ENCODE measurements at regions of chr10 and their contacts with region 1.

Region 1: DNA sequence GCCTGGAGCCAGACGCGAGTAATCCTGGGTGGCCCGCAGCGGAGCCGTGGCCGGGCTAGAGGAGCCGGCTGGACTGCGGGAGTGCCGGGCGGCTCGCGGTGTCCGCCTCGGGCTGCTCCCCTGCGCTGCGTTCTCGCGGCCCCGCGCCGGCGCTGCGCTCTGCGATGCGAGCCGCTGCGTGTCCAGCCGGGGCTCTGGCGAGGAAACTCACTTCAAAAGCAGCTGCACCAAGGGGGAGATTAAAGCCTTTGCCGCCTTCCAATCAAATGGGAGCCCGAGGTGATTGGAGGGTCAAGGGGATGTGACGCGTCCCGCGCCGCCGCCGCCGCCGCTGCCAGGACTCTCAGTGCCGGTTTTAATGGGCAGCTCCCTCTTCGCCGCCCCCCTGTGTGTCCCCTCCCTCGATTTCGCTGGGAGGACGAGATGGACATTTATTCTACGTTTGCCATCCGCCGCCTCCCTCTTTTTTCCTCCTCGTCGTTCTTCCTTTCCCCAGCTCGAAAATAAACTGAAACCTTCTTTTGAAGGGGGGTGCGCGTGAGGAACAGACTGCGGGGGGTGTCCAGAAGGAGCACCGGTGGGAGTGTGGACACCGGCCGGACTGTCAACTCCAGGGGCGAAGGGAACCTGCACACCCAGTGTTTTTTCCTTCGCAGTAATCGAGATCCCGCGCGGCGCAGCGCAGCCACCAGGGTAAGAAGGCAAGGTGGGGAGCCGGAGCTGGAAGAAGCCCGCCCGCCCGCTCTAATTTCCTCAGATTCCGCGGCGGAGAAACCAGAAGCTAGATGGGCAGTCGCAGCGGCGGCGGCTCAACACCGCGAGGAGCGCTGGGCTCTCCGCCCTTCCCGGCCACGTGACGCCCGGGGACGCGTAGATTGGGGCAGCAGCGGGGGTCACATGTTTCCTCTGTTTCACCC is at the start of gene ZNF503:
- DNase-seq: peak; percentile 99
- H3K4me3 ChIP-seq: peak within 1 kb of the TSS; percentile 76 to 97 (median 92)
- H3K27ac ChIP-seq: peak within 1 kb of the TSS; percentile 93 to 99 (median 98)
- H3K4me1 ChIP-seq: peaks cover 0 to 38% (median 29%) of the 10 kb centered on the region in 4 donors
- H3K27me3 ChIP-seq: no peaks in the 10 kb centered on the region
- CTCF ChIP-seq: peak; percentile 15 to 66 (median 46)
- EP300 ChIP-seq: peak in 2 of 4 donors; percentile 60 to 69
- POLR2A ChIP-seq: peak; percentile 65 to 80
- total RNA-seq, gene ZNF503: 10.0 to 20.3 (median 18.2) TPM

Region 2: GRCh38 chr10:74855027-74855426 is 546.8 kb before region 1 on chr10:
- intact Hi-C with region 1: no loop called
- DNase-seq: peak; percentile 73
- H3K4me3 ChIP-seq: no peak overlapping the region
- H3K27ac ChIP-seq: peak overlapping the region in 3 of 4 donors; percentile 14 to 38 (median 30)
- H3K4me1 ChIP-seq: peaks cover 0 to 72% (median 29%) of the 10 kb centered on the region in 4 donors
- H3K27me3 ChIP-seq: no peaks in the 10 kb centered on the region
- CTCF ChIP-seq: no peak
- EP300 ChIP-seq: no peak
- POLR2A ChIP-seq: no peak

Region 3: DNA sequence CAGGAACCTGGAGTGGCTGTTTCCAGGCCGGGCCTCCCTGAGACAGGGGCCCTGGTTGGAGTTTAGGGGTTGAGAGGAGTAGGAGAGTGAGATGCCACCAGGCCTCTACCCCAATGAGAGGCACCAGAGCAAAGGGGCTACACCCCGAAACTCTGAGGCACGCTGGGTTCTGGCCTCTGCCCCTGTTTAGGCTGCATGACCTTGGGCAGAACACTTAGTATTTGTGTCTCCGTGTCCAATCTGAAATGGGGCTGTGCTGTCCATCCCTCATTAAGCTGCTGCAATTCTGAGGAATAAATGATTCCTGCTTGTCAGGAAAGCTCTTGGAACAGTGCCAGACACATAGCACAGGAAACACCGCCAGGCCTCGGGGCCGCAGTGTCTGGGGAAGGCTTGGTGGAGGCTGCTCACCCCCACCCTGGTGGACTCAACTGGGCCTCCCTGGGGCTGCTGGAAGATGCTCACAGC is 330.8 kb before region 1 on chr10:
- intact Hi-C with region 1: no loop called
- DNase-seq: no peak
- H3K4me3 ChIP-seq: no peak overlapping the region
- H3K27ac ChIP-seq: no peak overlapping the region
- H3K4me1 ChIP-seq: no peaks in the 10 kb centered on the region
- H3K27me3 ChIP-seq: no peaks in the 10 kb centered on the region
- CTCF ChIP-seq: no peak
- EP300 ChIP-seq: no peak
- POLR2A ChIP-seq: no peak

Region 4: GRCh38 chr10:75449382-75450070 is 47.7 kb after region 1 on chr10:
- intact Hi-C with region 1: no loop called
- DNase-seq: no peak
- H3K4me3 ChIP-seq: no peak overlapping the region
- H3K27ac ChIP-seq: peak overlapping the region in 1 of 4 donors; percentile 50
- H3K4me1 ChIP-seq: peaks cover 0 to 23% (median 0%) of the 10 kb centered on the region in 4 donors
- H3K27me3 ChIP-seq: no peaks in the 10 kb centered on the region
- CTCF ChIP-seq: no peak
- EP300 ChIP-seq: no peak
- POLR2A ChIP-seq: no peak

Region 5: GRCh38 chr10:75662715-75663114 is 260.9 kb after region 1 on chr10:
- intact Hi-C with region 1: loop called (anchors 2 kb)
- DNase-seq: peak; percentile 90
- H3K4me3 ChIP-seq: no peak overlapping the region
- H3K27ac ChIP-seq: peak overlapping the region; percentile 72 to 86 (median 82)
- H3K4me1 ChIP-seq: peaks cover 0 to 47% (median 33%) of the 10 kb centered on the region in 4 donors
- H3K27me3 ChIP-seq: no peaks in the 10 kb centered on the region
- CTCF ChIP-seq: no peak
- EP300 ChIP-seq: peak in 3 of 4 donors; percentile 76 to 81 (median 77)
- POLR2A ChIP-seq: no peak

Region 6: GRCh38 chr10:75910032-75910431 is 508.2 kb after region 1 on chr10:
- intact Hi-C with region 1: loop called (anchors 2 kb)
- DNase-seq: no peak
- H3K4me3 ChIP-seq: no peak overlapping the region
- H3K27ac ChIP-seq: no peak overlapping the region
- H3K4me1 ChIP-seq: no peaks in the 10 kb centered on the region
- H3K27me3 ChIP-seq: no peaks in the 10 kb centered on the region
- CTCF ChIP-seq: peak; percentile 21 to 62 (median 54)
- EP300 ChIP-seq: no peak
- POLR2A ChIP-seq: no peak

Region 7: DNA sequence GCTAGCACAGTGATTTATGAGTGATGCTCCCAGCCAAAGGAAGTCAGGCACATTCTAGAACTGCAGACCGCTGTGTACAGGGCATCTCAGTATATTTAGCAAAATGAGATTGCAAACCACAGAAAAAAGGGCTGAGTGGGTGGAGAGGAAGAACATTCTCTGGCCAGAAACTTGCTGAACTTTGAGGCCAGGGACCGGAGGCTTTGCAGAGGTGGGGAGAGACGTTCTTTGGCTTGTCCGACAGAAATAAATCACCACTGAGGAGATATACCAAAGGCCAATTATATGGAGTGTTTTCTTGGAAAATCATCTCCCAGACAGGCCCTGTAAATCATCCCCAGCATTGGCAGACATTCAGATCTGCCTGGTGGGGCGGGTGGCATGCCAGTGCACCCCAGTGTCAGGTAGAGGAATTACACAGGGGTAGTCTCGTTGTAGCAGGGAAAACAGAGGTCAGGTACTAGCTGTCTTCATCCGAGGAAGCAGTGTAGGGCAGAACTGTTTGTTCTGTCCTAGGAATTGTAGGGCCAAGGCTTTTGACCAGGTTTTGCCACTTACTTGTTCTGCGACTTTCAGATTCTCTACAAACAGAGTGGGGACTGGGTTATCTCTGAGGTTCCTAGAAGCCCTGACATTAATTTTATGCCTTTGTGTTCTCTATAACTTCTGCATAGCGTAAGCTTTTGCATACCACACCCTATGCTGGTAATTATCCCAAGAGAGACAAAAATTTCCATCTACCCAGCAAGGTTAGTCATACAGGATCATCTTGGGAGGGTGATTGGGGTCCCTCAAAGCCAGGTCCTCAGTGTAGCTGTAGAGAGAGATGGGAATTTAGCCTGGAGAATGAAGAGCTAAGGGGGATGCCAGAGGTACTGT is 685.2 kb after region 1 on chr10:
- intact Hi-C with region 1: loop called (anchors 2 kb)
- DNase-seq: peak; percentile 89
- H3K4me3 ChIP-seq: no peak overlapping the region
- H3K27ac ChIP-seq: peak overlapping the region; percentile 60 to 78 (median 74)
- H3K4me1 ChIP-seq: peaks cover 0 to 32% (median 24%) of the 10 kb centered on the region in 4 donors
- H3K27me3 ChIP-seq: no peaks in the 10 kb centered on the region
- CTCF ChIP-seq: peak; percentile 64 to 89 (median 78)
- EP300 ChIP-seq: peak in 3 of 4 donors; percentile 48 to 75 (median 58)
- POLR2A ChIP-seq: no peak

Region 8: DNA sequence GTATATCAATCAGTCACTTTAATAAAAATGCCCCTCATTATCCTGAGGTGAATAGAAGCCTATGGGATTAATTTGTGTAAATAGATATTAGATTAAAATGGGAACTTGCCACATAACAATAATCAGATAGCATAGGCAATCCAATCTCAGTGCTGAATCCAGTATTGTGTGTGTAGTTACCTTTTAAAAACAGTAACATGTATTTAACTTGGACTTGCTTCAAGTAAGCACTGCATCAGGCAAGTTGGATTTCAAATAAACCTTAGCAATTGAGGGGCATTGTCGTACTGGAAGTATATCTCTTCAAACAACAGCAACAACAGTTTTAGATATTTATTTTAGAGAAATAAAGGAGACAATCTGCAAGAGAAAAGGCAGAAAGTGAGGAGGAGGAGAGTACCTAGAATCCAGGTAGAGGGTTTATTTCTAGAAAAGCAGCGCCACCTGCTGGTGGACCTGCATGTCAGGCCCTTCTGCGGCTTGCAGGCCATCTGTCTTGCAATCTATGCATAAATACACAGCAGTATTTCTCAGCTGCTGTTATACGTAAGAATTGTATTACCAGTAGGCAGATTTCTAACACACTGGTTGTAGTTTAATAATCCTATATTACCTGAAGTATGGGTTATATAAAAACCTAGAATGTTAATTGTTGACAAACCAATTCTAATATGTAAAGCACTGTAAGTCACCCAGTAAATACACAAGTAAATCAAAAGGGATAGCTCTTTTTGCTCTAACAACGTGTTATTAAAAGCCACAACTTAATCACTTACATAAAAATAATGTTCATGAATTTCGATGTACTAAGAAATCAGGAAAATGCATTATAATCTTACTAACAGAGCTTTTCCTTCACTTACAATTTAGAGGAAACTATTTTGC is 1583.0 kb after region 1 on chr10:
- intact Hi-C with region 1: loop called (anchors 10 kb)
- DNase-seq: peak; percentile 87
- H3K4me3 ChIP-seq: no peak overlapping the region
- H3K27ac ChIP-seq: peak overlapping the region in 3 of 4 donors; percentile 26 to 37 (median 32)
- H3K4me1 ChIP-seq: peaks cover 0 to 40% (median 32%) of the 10 kb centered on the region in 4 donors
- H3K27me3 ChIP-seq: no peaks in the 10 kb centered on the region
- CTCF ChIP-seq: peak; percentile 59 to 94 (median 86)
- EP300 ChIP-seq: no peak
- POLR2A ChIP-seq: no peak

Measured in sigmoid colon (tissue), 7 donors.